ENCODE measurements at regions of chr6 and their contacts with region 1.

Region 1: GRCh38 chr6:46419576-46420002 is 71.7 kb downstream of the RCAN2 start:
- DNase-seq: peak; percentile 35 to 68 (median 44)
- ATAC-seq: peak; percentile 76; the same call in 2 of the 3 replicates
- H3K4me3 ChIP-seq: no peak overlapping the region
- H3K27ac ChIP-seq: no peak overlapping the region
- H3K4me1 ChIP-seq: no peaks in the 10 kb centered on the region
- H3K27me3 ChIP-seq: no peaks in the 10 kb centered on the region
- CTCF ChIP-seq: peak; percentile 58 to 86 (median 71)
- EP300 ChIP-seq: no peak
- POLR2A ChIP-seq: no peak
- RAD21 ChIP-seq: peak; percentile 93 to 98

Region 2: DNA sequence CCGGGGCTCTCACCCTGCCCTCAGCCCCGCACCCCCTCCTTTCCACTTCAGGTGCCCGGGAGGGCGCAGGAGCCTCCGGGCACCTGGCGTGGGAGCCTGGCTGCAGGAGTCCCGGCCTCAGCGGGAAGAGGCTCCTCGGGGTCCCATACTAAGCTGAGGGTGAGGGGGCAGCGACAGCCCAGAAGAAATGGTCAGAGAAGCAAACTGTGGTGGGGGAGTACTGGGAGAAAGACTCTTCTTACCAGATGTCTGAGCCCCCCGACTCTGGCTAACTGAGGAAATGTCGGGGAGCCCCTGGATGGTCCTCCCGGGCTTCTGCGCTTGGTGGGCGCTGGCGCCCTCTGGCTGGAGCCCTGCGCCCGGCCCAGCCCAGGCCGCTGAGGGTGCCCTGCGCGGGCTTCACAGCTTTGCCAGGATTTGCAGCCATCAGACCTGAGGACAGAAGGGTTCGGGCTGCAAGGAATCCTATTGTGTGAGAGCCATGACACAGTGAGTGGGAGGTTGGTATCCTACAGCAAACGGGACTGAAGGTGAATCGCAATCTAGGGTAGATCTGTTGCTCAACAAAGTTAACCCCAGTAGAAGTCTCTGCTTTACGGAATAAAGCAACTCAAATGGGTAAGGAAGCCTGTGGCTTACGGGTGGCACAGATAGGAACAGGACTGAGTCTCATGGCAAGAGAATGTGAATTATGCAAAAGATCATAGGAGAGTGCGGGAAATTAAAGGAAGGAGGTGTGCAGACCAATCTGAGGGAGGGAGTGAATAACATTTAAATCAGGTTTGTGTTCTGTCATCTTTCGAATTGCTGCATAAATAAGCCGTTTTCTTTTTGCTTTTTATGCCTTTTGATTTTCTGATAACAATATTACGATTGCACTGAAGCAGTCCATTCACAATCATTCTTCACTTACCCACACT is 72.3 kb after region 1 on chr6:
- CTCF ChIA-PET with region 1: no interaction called
- POLR2A ChIA-PET with region 1: no interaction called
- in situ Hi-C with region 1: no loop called
- intact Hi-C with region 1: loop called (anchors 5 kb)
- DNase-seq: peak in 1 of 4 experiments; percentile 8
- ATAC-seq: peak; percentile 75
- H3K4me3 ChIP-seq: no peak overlapping the region
- H3K27ac ChIP-seq: no peak overlapping the region
- H3K4me1 ChIP-seq: peaks cover 0 to 10% of the 10 kb centered on the region in 2 experiments; a peak in 2 of 5 replicates
- H3K27me3 ChIP-seq: peaks cover 0 to 17% of the 10 kb centered on the region in 2 experiments; a peak in 3 of 5 replicates
- CTCF ChIP-seq: peak in 2 of 3 experiments; percentile 29 to 31; a peak in 4 of 6 replicates
- EP300 ChIP-seq: no peak
- POLR2A ChIP-seq: no peak
- RAD21 ChIP-seq: peak; percentile 38 to 48

Region 3: GRCh38 chr6:46637145-46637544 is 217.6 kb after region 1 on chr6:
- CTCF ChIA-PET with region 1: no interaction called
- POLR2A ChIA-PET with region 1: no interaction called
- in situ Hi-C with region 1: loop called (anchors 10 kb)
- intact Hi-C with region 1: no loop called
- DNase-seq: no peak
- ATAC-seq: no peak
- H3K4me3 ChIP-seq: no peak overlapping the region
- H3K27ac ChIP-seq: no peak overlapping the region
- H3K4me1 ChIP-seq: no peaks in the 10 kb centered on the region
- H3K27me3 ChIP-seq: no peaks in the 10 kb centered on the region; a peak in 1 of 5 replicates
- CTCF ChIP-seq: no peak
- EP300 ChIP-seq: no peak
- POLR2A ChIP-seq: no peak
- RAD21 ChIP-seq: no peak

Region 4: DNA sequence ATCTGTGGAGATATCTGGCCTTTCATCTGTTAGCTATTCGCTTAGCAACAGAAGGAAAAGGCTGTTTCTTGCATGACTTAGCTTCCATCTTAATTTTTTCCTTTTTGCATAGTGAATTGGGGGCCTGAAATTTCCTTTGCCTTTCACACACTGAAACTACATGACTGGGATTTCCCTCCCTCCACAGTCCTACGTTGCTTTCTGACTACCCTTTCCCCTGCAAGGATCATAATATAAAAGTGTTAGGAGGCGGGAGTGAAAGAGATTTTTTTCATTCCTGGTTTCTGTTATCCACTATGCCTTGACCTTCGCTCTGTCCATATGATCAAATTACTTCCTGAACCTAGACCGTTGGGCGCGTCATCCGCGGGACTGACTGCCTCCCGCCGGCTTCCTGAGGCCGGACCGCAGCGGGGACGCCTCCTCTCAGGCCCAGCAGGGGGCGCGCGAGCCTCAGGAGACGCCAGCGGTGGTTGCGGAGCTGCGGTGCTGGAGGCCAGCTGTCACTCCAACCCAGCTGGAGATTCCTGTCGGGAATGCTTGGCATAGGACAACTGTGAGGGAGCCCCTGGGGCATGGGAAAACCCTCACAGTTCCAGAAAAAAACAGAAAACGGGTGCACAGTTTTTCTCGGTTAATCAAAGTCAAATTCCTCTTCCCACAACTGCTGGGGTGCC is 429.2 kb after region 1 on chr6:
- CTCF ChIA-PET with region 1: no interaction called
- POLR2A ChIA-PET with region 1: no interaction called
- in situ Hi-C with region 1: no loop called
- intact Hi-C with region 1: loop called (anchors 5 kb)
- DNase-seq: peak; percentile 75 to 87 (median 80)
- ATAC-seq: peak; percentile 100
- H3K4me3 ChIP-seq: no peak overlapping the region
- H3K27ac ChIP-seq: no peak overlapping the region
- H3K4me1 ChIP-seq: peaks cover 0 to 5% of the 10 kb centered on the region in 2 experiments; a peak in 2 of 5 replicates
- H3K27me3 ChIP-seq: peaks cover 0 to 5% of the 10 kb centered on the region in 2 experiments; a peak in 1 of 5 replicates
- CTCF ChIP-seq: peak; percentile 92 to 96 (median 93)
- EP300 ChIP-seq: no peak
- POLR2A ChIP-seq: no peak
- RAD21 ChIP-seq: peak; percentile 77 to 88

Region 5: GRCh38 chr6:47047479-47048407 is 628.2 kb after region 1 on chr6:
- CTCF ChIA-PET with region 1: interaction called, 10 read pairs
- POLR2A ChIA-PET with region 1: no interaction called
- in situ Hi-C with region 1: no loop called
- intact Hi-C with region 1: loop called (anchors 1 kb)
- DNase-seq: peak; percentile 27 to 72 (median 39)
- ATAC-seq: peak; percentile 99
- H3K4me3 ChIP-seq: no peak overlapping the region
- H3K27ac ChIP-seq: no peak overlapping the region
- H3K4me1 ChIP-seq: no peaks in the 10 kb centered on the region
- H3K27me3 ChIP-seq: no peaks in the 10 kb centered on the region
- CTCF ChIP-seq: peak; percentile 74 to 90 (median 84)
- EP300 ChIP-seq: no peak
- POLR2A ChIP-seq: no peak
- RAD21 ChIP-seq: peak; percentile 70 to 85